ENCODE measurements at regions of chr21 and their contacts with region 1.

Region 1: DNA sequence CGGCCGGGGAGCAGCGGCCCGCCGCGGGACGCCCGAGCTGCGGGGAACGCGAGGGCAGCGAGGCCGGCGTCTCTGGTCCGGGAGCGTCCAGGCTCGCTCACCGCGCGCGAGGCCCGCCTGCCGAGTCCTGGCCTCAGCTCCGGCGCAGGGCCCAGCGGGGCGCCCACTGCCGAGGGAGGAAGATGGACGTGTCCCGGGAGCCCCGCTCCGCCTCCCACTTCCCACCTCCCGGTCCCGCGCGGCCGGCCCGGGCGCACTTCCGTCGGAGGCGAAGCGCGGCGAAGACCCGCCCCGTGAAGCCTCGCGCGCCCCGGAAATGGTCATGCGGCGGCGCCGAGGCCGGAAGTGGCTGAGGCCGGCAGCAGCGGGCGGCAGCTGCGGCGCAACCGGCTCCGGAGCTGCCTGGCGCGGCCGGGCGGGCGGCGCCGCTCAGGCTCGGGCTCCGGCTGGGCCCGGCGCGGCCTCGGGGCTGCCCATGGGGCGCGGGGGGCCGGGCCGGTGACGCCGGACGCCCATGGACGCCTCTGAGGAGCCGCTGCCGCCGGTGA is at the start of gene TRAPPC10:
- DNase-seq: peak; percentile 90
- CTCF ChIP-seq: no peak

Region 2: GRCh38 chr21:43965911-43966585 is 46.0 kb before region 1 on chr21:
- CTCF ChIA-PET with region 1: no interaction called
- POLR2A ChIA-PET with region 1: no interaction called
- DNase-seq: no peak
- CTCF ChIP-seq: no peak

Region 3: DNA sequence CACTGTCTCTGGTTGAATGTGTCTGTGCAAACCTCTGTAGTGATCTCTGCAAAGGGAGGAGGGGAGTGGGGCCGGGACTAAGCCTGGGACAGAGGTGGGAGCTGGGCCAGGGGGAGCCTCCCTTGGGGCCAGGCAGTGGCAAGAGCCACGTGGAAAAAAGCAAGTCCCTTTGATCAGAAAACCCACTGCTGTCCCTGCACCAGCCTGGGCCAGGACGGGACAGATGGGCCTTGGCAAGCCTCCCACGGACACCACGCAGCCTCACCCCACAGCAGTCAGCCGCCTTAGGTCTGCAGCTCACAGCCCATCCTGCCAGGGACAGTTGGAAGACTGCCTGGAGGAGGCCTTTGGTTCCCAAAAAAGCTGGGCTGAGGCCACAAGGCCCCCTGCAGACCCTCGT is 11.7 kb before region 1 on chr21:
- CTCF ChIA-PET with region 1: interaction called, 16 read pairs
- POLR2A ChIA-PET with region 1: no interaction called
- DNase-seq: no peak
- CTCF ChIP-seq: no peak